ENCODE measurements at regions of chr19 and their contacts with region 1.

Region 1: DNA sequence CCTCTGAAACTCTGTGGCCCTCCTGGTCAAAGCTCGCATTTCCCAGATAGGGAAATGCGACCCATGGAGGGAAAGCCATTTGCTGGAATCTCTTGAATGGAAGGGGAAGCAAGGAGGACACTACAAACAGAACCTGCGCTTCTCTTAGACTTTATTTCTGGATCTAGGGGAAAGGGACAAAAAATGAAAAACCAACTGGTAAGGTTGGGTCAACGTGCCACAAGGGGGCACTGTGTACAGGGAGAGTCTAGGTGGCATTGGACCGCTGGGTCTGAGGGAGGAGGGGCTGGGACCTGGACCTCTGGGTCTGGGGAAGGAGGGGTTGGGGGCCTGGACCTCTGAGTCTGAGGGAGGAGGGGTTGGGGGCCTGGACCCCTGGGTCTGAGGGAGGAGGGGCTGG is 5.0 kb downstream of the KLK4 start:
- DNase-seq: peak; percentile 54
- H3K4me3 Mint-ChIP-seq: no peak overlapping the region
- H3K27ac Mint-ChIP-seq: no peak overlapping the region
- H3K4me1 Mint-ChIP-seq: peaks cover 3% of the 10 kb centered on the region
- H3K27me3 Mint-ChIP-seq: peaks cover 18% of the 10 kb centered on the region

Region 2: DNA sequence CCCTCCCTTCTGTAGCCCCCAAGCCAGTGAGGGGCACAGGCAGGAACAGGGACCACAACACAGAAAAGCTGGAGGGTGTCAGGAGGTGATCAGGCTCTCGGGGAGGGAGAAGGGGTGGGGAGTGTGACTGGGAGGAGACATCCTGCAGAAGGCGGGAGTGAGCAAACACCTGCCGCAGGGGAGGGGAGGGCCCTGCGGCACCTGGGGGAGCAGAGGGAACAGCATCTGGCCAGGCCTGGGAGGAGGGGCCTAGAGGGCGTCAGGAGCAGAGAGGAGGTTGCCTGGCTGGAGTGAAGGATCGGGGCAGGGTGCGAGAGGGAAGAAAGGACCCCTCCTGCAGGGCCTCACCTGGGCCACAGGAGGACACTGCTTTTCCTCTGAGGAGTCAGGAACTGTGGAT is 47.3 kb before region 1 on chr19:
- CTCF ChIA-PET with region 1: no interaction called
- DNase-seq: no peak
- H3K4me3 Mint-ChIP-seq: no peak overlapping the region
- H3K27ac Mint-ChIP-seq: no peak overlapping the region
- H3K4me1 Mint-ChIP-seq: no peaks in the 10 kb centered on the region
- H3K27me3 Mint-ChIP-seq: peaks cover 35% of the 10 kb centered on the region

Region 3: GRCh38 chr19:50922317-50922853 is 16.2 kb after region 1 on chr19:
- CTCF ChIA-PET with region 1: interaction called, 10 read pairs
- DNase-seq: peak; percentile 84
- H3K4me3 Mint-ChIP-seq: no peak overlapping the region
- H3K27ac Mint-ChIP-seq: no peak overlapping the region
- H3K4me1 Mint-ChIP-seq: peaks cover 8% of the 10 kb centered on the region
- H3K27me3 Mint-ChIP-seq: peaks cover 11% of the 10 kb centered on the region

Region 4: GRCh38 chr19:51138549-51138979 is 232.3 kb after region 1 on chr19:
- CTCF ChIA-PET with region 1: no interaction called
- DNase-seq: no peak
- H3K4me3 Mint-ChIP-seq: no peak overlapping the region
- H3K27ac Mint-ChIP-seq: no peak overlapping the region
- H3K4me1 Mint-ChIP-seq: peaks cover 15% of the 10 kb centered on the region
- H3K27me3 Mint-ChIP-seq: peaks cover 50% of the 10 kb centered on the region

Measured in activated naive CD4-positive, alpha-beta T cell treated with anti-CD3 and anti-CD28 coated beads, Interleukin-2, amount 10 ng/mL, durations not matched to agents 7 days and 5 days (primary cell).